Activated T-helper 2 cell treated with anti-CD3 and anti-CD28 coated beads, Interferon-gamma antibody, Interleukin-2, Interleukin-4, amounts not matched to agents 10 μg/mL and 5 μg/mL and 100 μg/mL, durations not matched to agents 14 hours and 24 hours and 36 hours (primary cell): ENCODE measurements at regions of chr17 and their contacts with region 1.

Region 1: GRCh38 chr17:41665566-41666236 is 23.0 kb upstream of the EIF1 start:
- DNase-seq: peak; percentile 87
- H3K4me3 Mint-ChIP-seq: peak overlapping the region; percentile 78
- H3K27ac Mint-ChIP-seq: peak overlapping the region; percentile 97
- H3K4me1 Mint-ChIP-seq: peaks cover 46% of the 10 kb centered on the region
- H3K27me3 Mint-ChIP-seq: peaks cover 7% of the 10 kb centered on the region

Region 2: GRCh38 chr17:40803617-40804082 is 862.1 kb before region 1 on chr17:
- intact Hi-C with region 1: loop called (anchors 5 kb)
- DNase-seq: peak; percentile 62
- H3K4me3 Mint-ChIP-seq: no peak overlapping the region
- H3K27ac Mint-ChIP-seq: no peak overlapping the region
- H3K4me1 Mint-ChIP-seq: peaks cover 3% of the 10 kb centered on the region
- H3K27me3 Mint-ChIP-seq: peaks cover 36% of the 10 kb centered on the region

Region 3: GRCh38 chr17:40909351-40909750 is 756.4 kb before region 1 on chr17:
- intact Hi-C with region 1: loop called (anchors 2 kb)
- DNase-seq: peak; percentile 27
- H3K4me3 Mint-ChIP-seq: no peak overlapping the region
- H3K27ac Mint-ChIP-seq: no peak overlapping the region
- H3K4me1 Mint-ChIP-seq: no peaks in the 10 kb centered on the region
- H3K27me3 Mint-ChIP-seq: peaks cover 29% of the 10 kb centered on the region

Region 4: GRCh38 chr17:41486809-41487720 is 178.6 kb before region 1 on chr17:
- intact Hi-C with region 1: loop called (anchors 5 kb)
- DNase-seq: peak; percentile 16
- H3K4me3 Mint-ChIP-seq: no peak overlapping the region
- H3K27ac Mint-ChIP-seq: no peak overlapping the region
- H3K4me1 Mint-ChIP-seq: no peaks in the 10 kb centered on the region
- H3K27me3 Mint-ChIP-seq: no peaks in the 10 kb centered on the region

Region 5: DNA sequence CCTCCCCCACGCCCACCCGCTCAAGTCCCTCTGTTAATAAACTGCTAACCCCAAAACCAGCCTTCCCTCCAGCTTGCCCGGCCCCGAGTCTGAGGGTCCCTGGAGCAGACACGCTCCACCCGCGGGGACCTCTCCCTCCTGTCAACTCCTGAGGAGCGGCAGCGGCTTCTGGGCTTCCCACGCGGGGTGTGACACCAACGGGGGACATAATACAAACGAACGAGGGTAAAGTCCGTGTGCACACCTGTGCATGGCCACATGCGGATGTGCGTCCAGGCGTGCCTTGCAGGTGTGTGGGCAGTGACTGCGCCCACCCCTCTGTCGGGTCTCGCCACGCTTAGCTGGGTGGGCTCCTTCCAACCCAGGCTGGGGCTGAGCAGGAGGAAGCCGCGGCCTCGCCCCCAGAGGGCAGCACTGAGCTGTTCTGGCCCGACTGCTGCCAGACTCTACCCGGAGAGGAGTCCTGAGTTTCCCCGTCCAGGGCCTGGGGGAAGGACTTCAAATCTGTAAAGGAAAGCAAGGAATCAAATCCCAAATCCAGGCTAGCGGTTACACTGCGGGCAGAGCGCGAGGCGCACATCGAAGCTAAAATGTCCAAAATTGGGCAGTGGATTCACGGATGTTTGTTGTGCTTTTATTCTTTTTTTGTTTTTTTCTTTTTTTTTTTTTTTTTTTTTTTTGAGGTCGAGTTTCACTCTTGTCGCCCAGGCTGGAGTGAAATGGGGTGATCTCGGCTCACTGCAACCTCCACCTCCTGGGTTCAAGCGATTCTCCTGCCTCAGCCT is 17.1 kb before region 1 on chr17:
- intact Hi-C with region 1: loop called (anchors 1 kb)
- DNase-seq: peak; percentile 74
- H3K4me3 Mint-ChIP-seq: peak overlapping the region; percentile 51
- H3K27ac Mint-ChIP-seq: peak overlapping the region; percentile 51
- H3K4me1 Mint-ChIP-seq: peaks cover 7% of the 10 kb centered on the region
- H3K27me3 Mint-ChIP-seq: peaks cover 2% of the 10 kb centered on the region

Region 6: GRCh38 chr17:41688699-41689496 is 23.2 kb after region 1 on chr17 and contains the start of gene EIF1:
- intact Hi-C with region 1: loop called (anchors 1 kb)
- DNase-seq: peak; percentile 99
- H3K4me3 Mint-ChIP-seq: peak within 1 kb of the TSS; percentile 96
- H3K27ac Mint-ChIP-seq: peak within 1 kb of the TSS; percentile 98
- H3K4me1 Mint-ChIP-seq: peaks cover 15% of the 10 kb centered on the region
- H3K27me3 Mint-ChIP-seq: no peaks in the 10 kb centered on the region
- total RNA-seq, gene EIF1: 779 and 785 TPM in 2 replicates